ENCODE measurements at regions of chr1 and their contacts with region 1.

Region 1: DNA sequence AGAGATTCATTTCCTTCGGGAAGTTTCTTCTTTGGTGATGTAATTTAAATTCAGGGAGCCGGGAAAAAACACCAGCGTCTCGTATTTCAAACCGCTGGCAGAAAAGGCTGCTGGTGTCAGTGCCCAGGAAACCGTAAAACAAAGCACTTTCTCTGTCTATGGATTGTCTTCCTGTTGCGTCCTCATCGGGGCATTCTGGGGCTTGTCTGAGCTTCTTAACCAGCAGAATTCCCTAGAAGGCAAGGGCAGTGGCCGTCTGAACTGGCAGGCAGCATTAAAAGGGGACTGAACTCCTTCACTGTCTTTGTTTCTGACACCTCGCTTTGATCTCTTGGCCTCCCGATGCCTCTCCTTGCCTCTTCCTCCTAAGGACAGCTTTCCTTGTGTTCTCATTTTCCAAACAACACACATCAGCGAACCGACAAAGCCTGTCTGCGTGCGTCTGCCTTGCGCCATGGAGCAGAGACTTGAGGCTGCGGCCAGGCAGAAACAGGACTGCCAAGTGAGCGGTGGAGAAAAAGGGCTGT is 391.6 kb upstream of the VAMP3 start:
- DNase-seq: peak; percentile 88
- H3K4me3 ChIP-seq: peak overlapping the region in 3 of 4 donors; percentile 2 to 28 (median 9)
- H3K27ac ChIP-seq: peak overlapping the region; percentile 71 to 82 (median 74)
- H3K4me1 ChIP-seq: peaks cover 0 to 29% (median 17%) of the 10 kb centered on the region in 4 donors
- H3K27me3 ChIP-seq: no peaks in the 10 kb centered on the region
- CTCF ChIP-seq: no peak
- EP300 ChIP-seq: peak; percentile 38 to 91 (median 74)
- POLR2A ChIP-seq: no peak

Region 2: DNA sequence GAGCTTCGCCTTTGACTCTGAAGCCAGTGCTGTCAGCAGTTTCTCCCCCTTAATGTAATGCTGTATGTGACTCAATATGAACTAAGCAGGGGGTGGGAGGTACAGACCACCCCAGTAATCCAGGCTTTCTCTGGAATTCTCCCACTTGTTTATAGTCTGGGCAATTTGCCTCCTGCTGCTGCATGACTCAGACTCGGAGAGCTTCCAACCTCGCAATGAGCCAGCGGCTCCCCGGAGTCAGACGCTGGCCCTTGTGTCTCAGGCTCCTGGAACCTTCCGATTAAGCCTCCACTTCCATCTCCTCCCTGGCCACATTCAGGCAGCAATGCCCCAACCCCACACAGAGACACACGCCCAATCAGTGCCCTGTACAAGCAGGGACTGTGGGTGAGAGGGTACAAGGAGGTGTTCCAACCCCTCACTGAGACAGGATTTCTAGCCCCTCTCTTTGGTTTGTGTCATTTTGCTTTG is 80.1 kb before region 1 on chr1:
- intact Hi-C with region 1: loop called (anchors 1 kb)
- DNase-seq: peak; percentile 84
- H3K4me3 ChIP-seq: no peak overlapping the region
- H3K27ac ChIP-seq: peak overlapping the region; percentile 49 to 83 (median 68)
- H3K4me1 ChIP-seq: peaks cover 0 to 41% (median 36%) of the 10 kb centered on the region in 4 donors
- H3K27me3 ChIP-seq: no peaks in the 10 kb centered on the region
- CTCF ChIP-seq: no peak
- EP300 ChIP-seq: peak in 1 of 4 donors; percentile 36
- POLR2A ChIP-seq: no peak

Region 3: DNA sequence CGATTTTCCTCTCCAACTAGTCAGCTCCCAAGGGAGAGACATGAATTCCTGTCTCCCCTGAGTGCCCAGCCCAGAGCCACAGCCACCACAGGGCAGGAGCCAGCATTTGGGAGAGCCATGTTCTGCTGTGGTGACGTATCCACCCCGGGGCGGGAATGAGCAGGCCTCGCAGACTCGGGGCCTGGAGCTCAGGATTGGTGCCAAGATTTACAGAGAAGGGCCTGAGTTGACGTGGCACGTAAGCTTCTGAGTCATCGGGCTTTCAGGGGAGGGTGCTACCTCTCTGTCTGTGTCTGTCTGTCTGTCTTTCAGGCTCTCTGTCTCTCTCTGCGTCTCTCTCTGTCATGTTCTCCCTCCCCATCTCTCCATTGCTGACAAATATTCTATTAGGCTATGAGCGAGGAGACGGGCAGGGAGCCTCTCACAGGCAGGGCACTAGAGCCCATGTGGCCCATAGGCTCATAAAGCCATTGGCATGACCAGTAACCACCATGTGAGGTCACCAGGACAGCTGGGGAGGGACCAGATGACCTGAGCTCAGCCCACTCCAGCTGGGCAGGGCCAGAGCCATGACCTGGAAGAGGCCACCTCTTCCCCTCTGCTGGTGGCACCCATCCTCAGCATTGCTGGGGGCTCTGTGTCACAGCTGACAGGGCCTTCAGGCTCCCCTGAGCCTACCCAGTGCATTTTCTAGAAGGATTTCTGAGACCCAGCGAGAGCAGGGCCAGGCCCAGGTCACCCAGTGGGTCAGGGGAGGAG is 91.6 kb after region 1 on chr1:
- intact Hi-C with region 1: loop called (anchors 5 kb)
- DNase-seq: peak; percentile 92
- H3K4me3 ChIP-seq: no peak overlapping the region
- H3K27ac ChIP-seq: peak overlapping the region; percentile 56 to 64 (median 60)
- H3K4me1 ChIP-seq: peaks cover 0 to 34% (median 26%) of the 10 kb centered on the region in 4 donors
- H3K27me3 ChIP-seq: no peaks in the 10 kb centered on the region
- CTCF ChIP-seq: no peak
- EP300 ChIP-seq: peak in 1 of 4 donors; percentile 9
- POLR2A ChIP-seq: no peak

Region 4: DNA sequence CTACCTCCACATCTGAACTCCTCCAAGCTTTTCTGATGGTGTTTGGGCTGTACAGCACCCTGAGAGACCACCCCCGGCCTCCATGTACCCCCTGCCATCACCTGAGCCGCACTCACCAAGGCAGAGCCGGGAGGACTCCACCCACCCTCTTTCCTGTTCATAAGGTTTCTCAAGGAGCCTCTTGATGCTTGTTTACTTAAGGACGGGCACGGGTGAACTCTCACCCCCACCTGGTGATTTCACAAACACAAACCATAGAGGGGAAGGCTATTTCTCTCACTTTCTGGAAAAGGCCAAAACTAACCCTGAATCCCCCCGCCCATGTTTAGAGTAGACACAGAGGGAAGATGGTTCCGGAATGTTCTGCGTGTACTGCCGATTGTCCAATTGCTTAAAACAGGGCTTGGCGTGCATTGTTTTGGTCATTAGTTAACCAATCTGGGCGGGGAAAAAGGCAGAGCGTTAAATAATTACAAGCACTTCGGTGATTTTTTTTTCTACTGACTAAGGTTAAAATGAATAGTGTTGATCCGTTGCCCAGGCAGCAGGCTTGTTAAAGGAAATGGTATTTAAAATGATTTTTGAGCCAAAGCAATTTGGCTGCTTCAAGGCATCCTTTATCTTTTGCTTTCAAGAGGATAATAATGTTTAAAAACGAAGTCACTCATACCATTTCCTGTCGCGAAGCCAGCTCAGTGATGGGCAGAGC is 111.8 kb after region 1 on chr1:
- intact Hi-C with region 1: no loop called
- DNase-seq: no peak
- H3K4me3 ChIP-seq: peak overlapping the region in 1 of 4 donors; percentile 4
- H3K27ac ChIP-seq: peak overlapping the region in 2 of 4 donors; percentile 15 to 41
- H3K4me1 ChIP-seq: peaks cover 0 to 17% (median 17%) of the 10 kb centered on the region in 4 donors
- H3K27me3 ChIP-seq: no peaks in the 10 kb centered on the region
- CTCF ChIP-seq: no peak
- EP300 ChIP-seq: peak in 1 of 4 donors; percentile 4
- POLR2A ChIP-seq: no peak

Region 5: GRCh38 chr1:7745791-7746190 is 366.3 kb after region 1 on chr1:
- intact Hi-C with region 1: no loop called
- DNase-seq: no peak
- H3K4me3 ChIP-seq: no peak overlapping the region
- H3K27ac ChIP-seq: no peak overlapping the region
- H3K4me1 ChIP-seq: no peaks in the 10 kb centered on the region
- H3K27me3 ChIP-seq: no peaks in the 10 kb centered on the region
- CTCF ChIP-seq: no peak
- EP300 ChIP-seq: no peak
- POLR2A ChIP-seq: no peak

Measured in sigmoid colon (tissue), 7 donors.